ENCODE measurements at regions of chr1 and their contacts with region 1.

Region 1: DNA sequence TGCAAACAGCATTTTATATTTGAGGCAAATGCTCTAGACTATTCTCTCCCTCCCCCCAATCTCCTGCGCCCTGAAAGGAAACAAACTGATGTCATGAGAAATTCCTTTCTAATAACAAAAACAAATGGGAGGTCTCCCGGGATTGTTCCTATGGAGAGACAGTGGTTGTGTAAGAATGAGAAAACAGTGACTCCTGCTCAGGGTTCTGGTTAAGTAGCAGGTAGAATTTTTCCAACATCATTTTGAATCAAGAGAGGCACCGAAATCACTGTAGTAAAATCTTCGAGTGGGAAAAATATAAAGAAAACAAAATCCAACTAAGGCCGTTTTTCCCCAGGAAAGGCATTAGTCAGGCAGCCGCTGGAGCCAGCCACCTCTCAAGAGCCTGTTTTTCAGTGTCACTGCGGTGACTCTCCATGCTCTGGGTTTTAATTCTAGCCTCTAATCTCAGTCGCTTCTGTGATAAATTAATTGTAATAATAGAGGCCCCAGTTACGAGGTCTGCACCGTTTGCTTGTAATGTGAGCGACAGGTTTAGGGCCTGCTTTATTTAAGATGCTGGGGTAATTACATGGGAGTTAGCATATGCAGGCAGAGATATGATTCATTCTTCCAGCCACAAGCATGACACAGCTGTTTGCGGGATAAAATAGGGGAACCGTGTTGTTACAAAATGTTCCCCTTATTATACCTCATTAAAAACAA is 80.3 kb downstream of the RNF220 start:
- DNase-seq: peak in 1 of 2 experiments; percentile 30
- H3K4me3 ChIP-seq: no peak overlapping the region
- H3K27ac ChIP-seq: peak overlapping the region; percentile 54
- H3K4me1 ChIP-seq: peaks cover 22% of the 10 kb centered on the region
- H3K27me3 ChIP-seq: no peaks in the 10 kb centered on the region
- CTCF ChIP-seq: no peak

Region 2: GRCh38 chr1:44318097-44319088 is 167.0 kb before region 1 on chr1:
- CTCF ChIA-PET with region 1: no interaction called
- POLR2A ChIA-PET with region 1: no interaction called
- intact Hi-C with region 1: no loop called
- DNase-seq: peak in 1 of 2 experiments; percentile 21
- H3K4me3 ChIP-seq: no peak overlapping the region
- H3K27ac ChIP-seq: no peak overlapping the region
- H3K4me1 ChIP-seq: no peaks in the 10 kb centered on the region
- H3K27me3 ChIP-seq: no peaks in the 10 kb centered on the region
- CTCF ChIP-seq: peak; percentile 92

Region 3: DNA sequence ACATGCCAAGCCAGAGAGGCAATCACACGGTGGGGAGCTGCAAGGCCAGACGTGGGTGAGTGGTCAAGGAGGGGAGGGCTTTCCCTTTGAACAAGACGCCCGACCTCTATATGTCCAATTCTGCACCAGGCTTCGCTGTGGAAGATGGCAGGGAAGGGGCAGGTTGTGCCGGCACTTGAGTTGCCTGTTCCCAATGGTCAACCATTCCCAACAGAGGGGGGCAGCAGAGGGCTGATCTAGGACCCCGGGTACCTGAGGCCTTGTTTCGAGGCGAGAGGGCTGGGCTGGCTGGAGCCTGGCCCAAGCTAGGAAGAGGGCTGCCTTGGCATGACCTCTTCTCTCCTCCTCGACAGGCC is 124.0 kb after region 1 on chr1:
- CTCF ChIA-PET with region 1: no interaction called
- POLR2A ChIA-PET with region 1: no interaction called
- intact Hi-C with region 1: no loop called
- DNase-seq: peak in 1 of 2 experiments; percentile 49
- H3K4me3 ChIP-seq: no peak overlapping the region
- H3K27ac ChIP-seq: no peak overlapping the region
- H3K4me1 ChIP-seq: no peaks in the 10 kb centered on the region
- H3K27me3 ChIP-seq: no peaks in the 10 kb centered on the region
- CTCF ChIP-seq: peak; percentile 56

Region 4: DNA sequence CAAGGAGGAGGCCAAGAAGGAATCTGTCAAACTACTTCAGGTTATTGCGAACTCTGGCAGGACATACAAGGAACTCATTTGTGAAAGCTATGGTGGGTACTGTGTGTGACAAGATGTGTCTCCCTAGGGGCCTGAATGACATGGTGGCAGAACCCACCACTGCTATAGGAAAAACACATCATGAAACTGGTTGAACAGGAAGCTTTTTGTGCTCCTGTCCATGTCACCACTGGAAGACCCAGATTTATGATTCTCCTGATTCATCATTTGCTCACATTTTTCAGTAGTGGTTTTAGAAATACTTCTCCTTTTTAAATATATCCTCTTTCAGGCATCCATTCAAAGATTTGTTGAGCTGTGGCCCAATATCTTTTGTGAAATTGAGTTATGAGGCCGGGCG is 212.8 kb after region 1 on chr1:
- CTCF ChIA-PET with region 1: no interaction called
- POLR2A ChIA-PET with region 1: interaction called, 13 read pairs
- intact Hi-C with region 1: no loop called
- DNase-seq: peak in 1 of 2 experiments; percentile 45
- H3K4me3 ChIP-seq: no peak overlapping the region
- H3K27ac ChIP-seq: no peak overlapping the region
- H3K4me1 ChIP-seq: peaks cover 25% of the 10 kb centered on the region
- H3K27me3 ChIP-seq: no peaks in the 10 kb centered on the region
- CTCF ChIP-seq: no peak

Region 5: DNA sequence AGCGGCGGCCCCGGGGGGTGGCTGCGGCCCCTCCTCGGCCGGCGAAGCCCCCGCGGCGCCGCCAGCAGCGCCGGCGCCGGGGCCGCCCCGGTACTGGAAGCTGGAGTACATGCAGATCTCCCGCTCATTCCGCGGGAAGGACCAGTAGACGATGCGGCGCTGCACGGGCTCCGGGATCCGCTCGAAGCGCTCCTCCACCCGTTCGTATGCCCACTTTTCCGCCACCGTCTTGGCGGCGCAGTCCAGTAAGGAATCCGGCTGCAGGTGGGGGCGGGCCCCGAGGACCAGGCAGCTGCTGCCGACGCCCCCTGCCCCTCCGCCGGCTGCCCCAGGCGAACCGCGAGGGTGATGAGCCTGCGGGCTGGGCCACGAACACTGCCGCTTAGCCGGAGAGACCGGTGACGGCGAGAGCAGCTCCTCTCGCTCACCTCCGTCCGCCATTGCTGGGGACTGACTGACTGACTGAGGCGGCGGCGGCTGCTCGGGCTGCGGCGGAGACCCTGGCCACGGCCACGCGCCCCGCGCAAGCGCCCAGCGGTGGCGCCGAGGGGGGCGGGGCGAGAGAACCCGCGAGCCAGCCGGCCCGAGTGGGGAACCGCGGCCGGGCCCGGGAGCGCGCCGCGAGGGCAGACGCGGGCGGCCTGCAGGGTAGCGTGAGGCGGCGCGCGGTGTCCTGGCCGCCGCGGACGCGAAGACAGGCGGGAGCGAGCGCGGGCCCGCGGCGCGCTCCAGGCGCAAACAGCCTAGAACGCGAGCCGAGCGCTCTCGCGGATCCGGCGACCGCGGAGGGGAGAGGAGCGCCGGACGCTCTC is 720.7 kb after region 1 on chr1 and contains the start of gene ZSWIM5:
- CTCF ChIA-PET with region 1: no interaction called
- POLR2A ChIA-PET with region 1: no interaction called
- intact Hi-C with region 1: no loop called
- DNase-seq: peak; percentile 40 to 65
- H3K4me3 ChIP-seq: peak within 1 kb of the TSS; percentile 95
- H3K27ac ChIP-seq: no peak within 1 kb of the TSS
- H3K4me1 ChIP-seq: peaks cover 13% of the 10 kb centered on the region
- H3K27me3 ChIP-seq: peaks cover 6% of the 10 kb centered on the region; the same call in 1 of the 2 replicates
- CTCF ChIP-seq: no peak
- total RNA-seq, gene ZSWIM5: 0.50 and 0.55 TPM in 2 replicates